ENCODE measurements at regions of chr18 and their contacts with region 1.

Region 1: GRCh38 chr18:53698907-53699306 is 525.6 kb downstream of the MBD2 start:
- DNase-seq: peak; percentile 63
- H3K4me3 Mint-ChIP-seq: no peak overlapping the region
- H3K27ac Mint-ChIP-seq: no peak overlapping the region
- H3K4me1 Mint-ChIP-seq: no peaks in the 10 kb centered on the region
- H3K27me3 Mint-ChIP-seq: peaks cover 14% of the 10 kb centered on the region
- CTCF ChIP-seq: peak; percentile 46

Region 2: GRCh38 chr18:53771664-53772063 is 72.8 kb after region 1 on chr18:
- CTCF ChIA-PET with region 1: no interaction called
- POLR2A ChIA-PET with region 1: no interaction called
- intact Hi-C with region 1: no loop called
- DNase-seq: no peak
- H3K4me3 Mint-ChIP-seq: no peak overlapping the region
- H3K27ac Mint-ChIP-seq: no peak overlapping the region
- H3K4me1 Mint-ChIP-seq: no peaks in the 10 kb centered on the region
- H3K27me3 Mint-ChIP-seq: no peaks in the 10 kb centered on the region
- CTCF ChIP-seq: no peak

Region 3: GRCh38 chr18:53864770-53865169 is 165.9 kb after region 1 on chr18:
- CTCF ChIA-PET with region 1: interaction called, 5 read pairs
- POLR2A ChIA-PET with region 1: no interaction called
- intact Hi-C with region 1: loop called (anchors 1 kb)
- DNase-seq: peak; percentile 39
- H3K4me3 Mint-ChIP-seq: no peak overlapping the region
- H3K27ac Mint-ChIP-seq: no peak overlapping the region
- H3K4me1 Mint-ChIP-seq: no peaks in the 10 kb centered on the region
- H3K27me3 Mint-ChIP-seq: no peaks in the 10 kb centered on the region
- CTCF ChIP-seq: peak; percentile 21

Region 4: DNA sequence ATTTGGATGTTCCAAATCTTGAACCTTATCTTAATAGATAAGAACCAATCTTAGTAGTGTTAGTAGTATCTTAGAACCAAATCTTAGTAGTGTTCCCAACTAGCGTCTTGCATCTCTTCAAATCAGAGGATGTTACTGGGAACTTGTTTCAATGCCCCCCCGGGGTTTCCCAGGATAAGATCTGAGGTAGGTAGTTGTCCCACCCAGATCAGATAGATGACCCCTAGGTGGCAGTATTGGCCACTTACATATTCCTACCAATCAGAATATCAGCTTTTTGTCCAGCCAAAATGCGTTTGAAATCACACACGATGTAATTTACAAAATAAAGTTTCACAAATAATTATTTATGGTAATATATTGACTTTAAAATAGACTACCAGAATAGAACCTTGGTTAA is 210.8 kb after region 1 on chr18:
- CTCF ChIA-PET with region 1: interaction called, 6 read pairs
- POLR2A ChIA-PET with region 1: no interaction called
- intact Hi-C with region 1: loop called (anchors 1 kb)
- DNase-seq: peak; percentile 63
- H3K4me3 Mint-ChIP-seq: no peak overlapping the region
- H3K27ac Mint-ChIP-seq: no peak overlapping the region
- H3K4me1 Mint-ChIP-seq: no peaks in the 10 kb centered on the region
- H3K27me3 Mint-ChIP-seq: peaks cover 11% of the 10 kb centered on the region
- CTCF ChIP-seq: peak; percentile 57

Region 5: GRCh38 chr18:54119524-54120019 is 420.7 kb after region 1 on chr18:
- CTCF ChIA-PET with region 1: interaction called, 67 read pairs
- POLR2A ChIA-PET with region 1: interaction called, 7 read pairs
- intact Hi-C with region 1: loop called (anchors 1 kb)
- DNase-seq: peak; percentile 68
- H3K4me3 Mint-ChIP-seq: peak overlapping the region; percentile 3
- H3K27ac Mint-ChIP-seq: peak overlapping the region; percentile 62
- H3K4me1 Mint-ChIP-seq: peaks cover 13% of the 10 kb centered on the region
- H3K27me3 Mint-ChIP-seq: no peaks in the 10 kb centered on the region
- CTCF ChIP-seq: peak; percentile 44

Region 6: DNA sequence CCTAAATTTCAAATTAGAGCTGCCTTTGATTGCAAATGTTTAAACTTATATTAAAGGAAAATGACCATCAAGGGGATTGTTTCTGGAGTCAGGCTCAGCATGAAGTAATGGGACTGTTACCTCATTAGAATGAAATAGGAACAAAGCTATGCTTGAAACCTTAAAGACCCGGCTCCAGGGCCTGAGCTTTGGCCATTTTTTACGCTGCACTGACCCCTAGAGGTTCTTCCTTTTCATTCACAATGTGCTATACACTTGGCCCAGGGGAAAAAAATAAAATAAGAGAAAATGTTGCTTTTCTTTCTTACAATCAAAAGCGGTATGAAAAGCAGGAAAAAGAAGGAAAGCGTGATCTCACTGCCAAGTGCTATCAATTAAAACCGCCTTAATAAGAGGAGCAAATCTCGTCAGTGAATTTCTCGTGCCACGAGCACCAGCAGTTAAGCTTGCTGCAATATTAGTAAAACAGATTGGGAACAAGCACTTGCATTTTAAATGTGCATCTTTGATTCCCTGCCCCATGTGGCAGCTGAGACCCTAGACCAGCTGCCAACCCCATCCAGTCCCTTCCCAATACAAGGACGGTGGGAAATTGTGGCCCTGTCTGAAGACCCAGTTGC is 429.0 kb after region 1 on chr18:
- CTCF ChIA-PET with region 1: interaction called, 14 read pairs
- POLR2A ChIA-PET with region 1: no interaction called
- intact Hi-C with region 1: no loop called
- DNase-seq: peak; percentile 67
- H3K4me3 Mint-ChIP-seq: no peak overlapping the region
- H3K27ac Mint-ChIP-seq: no peak overlapping the region
- H3K4me1 Mint-ChIP-seq: peaks cover 9% of the 10 kb centered on the region
- H3K27me3 Mint-ChIP-seq: no peaks in the 10 kb centered on the region
- CTCF ChIP-seq: peak; percentile 59

Measured in MCF 10A (cell line).